Activated naive CD4-positive, alpha-beta T cell treated with anti-CD3 and anti-CD28 coated beads for 36 hours (primary cell): ENCODE measurements at regions of chr6 and their contacts with region 1.

Region 1: DNA sequence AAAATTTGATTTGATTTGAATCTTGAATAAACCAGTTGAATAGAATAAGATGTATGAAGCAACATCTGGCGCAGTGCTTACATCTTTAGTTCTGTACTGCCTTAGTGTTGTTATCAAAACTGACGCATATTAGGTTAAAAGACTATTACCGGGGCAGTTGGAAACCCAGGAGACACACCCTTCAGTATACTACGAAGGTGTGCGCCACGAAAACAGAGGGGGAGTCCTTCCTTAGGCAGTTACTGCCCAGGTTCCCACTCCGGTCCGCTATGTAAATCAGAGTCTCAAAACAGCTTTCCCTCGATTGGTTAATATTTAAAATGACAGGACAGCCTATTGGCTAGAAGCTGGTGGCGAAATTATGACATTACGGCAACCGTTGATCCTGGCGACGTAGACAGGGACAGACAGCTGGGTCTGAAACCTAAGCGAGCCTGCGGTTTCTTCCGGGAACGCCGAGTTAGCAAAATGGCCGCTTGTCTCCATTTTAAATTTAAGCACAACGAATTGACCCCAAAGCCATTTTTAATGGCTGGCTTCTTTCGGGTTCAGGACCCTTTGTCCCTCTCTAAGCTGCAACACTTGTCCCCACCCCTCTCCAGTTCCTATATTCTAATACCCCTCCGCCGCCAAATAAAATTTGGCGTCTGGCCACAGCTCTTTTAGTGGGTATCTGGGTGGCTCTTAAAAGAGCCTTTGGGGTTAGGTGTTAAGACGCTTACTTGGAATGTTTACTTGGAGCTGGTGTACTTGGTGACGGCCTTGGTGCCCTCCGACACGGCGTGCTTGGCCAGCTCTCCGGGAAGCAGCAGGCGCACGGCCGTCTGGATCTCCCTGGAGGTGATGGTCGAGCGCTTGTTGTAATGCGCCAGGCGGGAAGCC is 35.8 kb downstream of the HFE start:
- DNase-seq: peak; percentile 98
- H3K4me3 Mint-ChIP-seq: peak overlapping the region; percentile 97
- H3K27ac Mint-ChIP-seq: peak overlapping the region; percentile 99
- H3K4me1 Mint-ChIP-seq: peaks cover 36% of the 10 kb centered on the region
- H3K27me3 Mint-ChIP-seq: peaks cover 6% of the 10 kb centered on the region

Region 2: DNA sequence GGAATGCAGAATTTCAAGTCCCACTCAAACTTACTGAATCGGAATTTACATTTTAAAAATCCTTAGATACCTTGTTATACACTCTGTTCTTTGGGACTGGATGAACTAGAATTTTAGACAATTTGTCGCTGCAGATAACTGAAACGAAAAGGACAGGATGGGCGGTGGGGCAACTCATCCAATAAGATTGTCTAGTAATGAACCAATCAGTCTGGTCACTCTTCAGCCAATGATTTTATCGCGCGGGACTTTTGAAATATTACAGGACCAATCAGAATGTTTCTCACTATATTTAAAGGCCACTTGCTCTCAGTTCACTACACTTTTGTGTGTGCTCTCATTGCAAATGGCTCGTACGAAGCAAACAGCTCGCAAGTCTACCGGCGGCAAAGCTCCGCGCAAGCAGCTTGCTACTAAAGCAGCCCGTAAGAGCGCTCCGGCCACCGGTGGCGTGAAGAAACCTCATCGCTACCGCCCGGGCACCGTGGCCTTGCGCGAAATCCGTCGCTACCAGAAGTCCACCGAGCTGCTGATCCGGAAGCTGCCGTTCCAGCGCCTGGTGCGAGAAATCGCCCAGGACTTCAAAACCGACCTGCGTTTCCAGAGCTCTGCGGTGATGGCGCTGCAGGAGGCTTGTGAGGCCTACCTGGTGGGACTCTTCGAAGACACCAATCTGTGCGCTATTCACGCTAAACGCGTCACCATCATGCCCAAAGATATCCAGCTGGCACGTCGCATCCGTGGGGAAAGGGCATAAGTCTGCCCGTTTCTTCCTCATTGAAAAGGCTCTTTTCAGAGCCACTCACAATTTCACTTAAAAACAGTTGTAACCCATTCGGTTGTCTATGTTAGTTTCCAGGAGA is 77.7 kb before region 1 on chr6:
- CTCF ChIA-PET with region 1: no interaction called
- intact Hi-C with region 1: loop called (anchors 1 kb)
- DNase-seq: peak; percentile 84
- H3K4me3 Mint-ChIP-seq: peak overlapping the region; percentile 83
- H3K27ac Mint-ChIP-seq: peak overlapping the region; percentile 99
- H3K4me1 Mint-ChIP-seq: peaks cover 13% of the 10 kb centered on the region
- H3K27me3 Mint-ChIP-seq: no peaks in the 10 kb centered on the region

Region 3: GRCh38 chr6:26157977-26158648 is 35.1 kb after region 1 on chr6:
- CTCF ChIA-PET with region 1: interaction called, 9 read pairs
- intact Hi-C with region 1: loop called (anchors 1 kb)
- DNase-seq: peak; percentile 92
- H3K4me3 Mint-ChIP-seq: peak overlapping the region; percentile 79
- H3K27ac Mint-ChIP-seq: peak overlapping the region; percentile 97
- H3K4me1 Mint-ChIP-seq: peaks cover 50% of the 10 kb centered on the region
- H3K27me3 Mint-ChIP-seq: peaks cover 13% of the 10 kb centered on the region

Region 4: DNA sequence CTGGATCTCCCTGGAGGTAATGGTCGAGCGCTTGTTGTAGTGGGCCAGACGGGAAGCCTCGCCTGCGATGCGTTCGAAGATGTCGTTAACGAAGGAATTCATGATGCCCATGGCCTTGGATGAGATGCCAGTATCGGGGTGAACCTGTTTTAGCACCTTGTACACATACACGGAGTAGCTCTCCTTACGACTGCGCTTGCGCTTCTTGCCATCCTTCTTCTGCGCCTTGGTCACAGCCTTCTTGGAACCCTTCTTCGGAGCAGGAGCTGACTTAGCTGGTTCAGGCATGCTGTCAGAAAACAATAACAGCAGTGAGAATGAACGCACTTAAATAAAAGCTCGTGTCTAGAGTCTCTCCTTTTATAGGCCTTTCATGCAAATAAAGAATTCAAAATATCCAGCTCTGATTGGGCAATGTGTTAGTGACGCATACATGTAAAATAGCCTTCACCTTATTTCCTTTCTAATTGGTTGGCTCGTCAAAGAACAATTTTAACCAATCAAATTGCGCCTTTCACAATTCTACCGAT is 93.4 kb after region 1 on chr6:
- CTCF ChIA-PET with region 1: no interaction called
- intact Hi-C with region 1: loop called (anchors 1 kb)
- DNase-seq: peak; percentile 85
- H3K4me3 Mint-ChIP-seq: no peak overlapping the region
- H3K27ac Mint-ChIP-seq: no peak overlapping the region
- H3K4me1 Mint-ChIP-seq: peaks cover 2% of the 10 kb centered on the region
- H3K27me3 Mint-ChIP-seq: no peaks in the 10 kb centered on the region

Region 5: GRCh38 chr6:26270903-26271667 is 148.1 kb after region 1 on chr6:
- CTCF ChIA-PET with region 1: no interaction called
- intact Hi-C with region 1: loop called (anchors 1 kb)
- DNase-seq: peak; percentile 92
- H3K4me3 Mint-ChIP-seq: no peak overlapping the region
- H3K27ac Mint-ChIP-seq: no peak overlapping the region
- H3K4me1 Mint-ChIP-seq: peaks cover 9% of the 10 kb centered on the region
- H3K27me3 Mint-ChIP-seq: peaks cover 5% of the 10 kb centered on the region

Region 6: GRCh38 chr6:27132532-27133280 is 1009.7 kb after region 1 on chr6:
- CTCF ChIA-PET with region 1: no interaction called
- intact Hi-C with region 1: loop called (anchors 1 kb)
- DNase-seq: peak; percentile 94
- H3K4me3 Mint-ChIP-seq: no peak overlapping the region
- H3K27ac Mint-ChIP-seq: no peak overlapping the region
- H3K4me1 Mint-ChIP-seq: peaks cover 19% of the 10 kb centered on the region
- H3K27me3 Mint-ChIP-seq: no peaks in the 10 kb centered on the region